Left cardiac atrium (tissue), 4 donors: ENCODE measurements at regions of chr10 and their contacts with region 1.

Region 1: GRCh38 chr10:91367127-91367531 is 43.0 kb upstream of the HECTD2 start:
- DNase-seq: no peak
- ATAC-seq: peak; percentile 30 to 53

Region 2: DNA sequence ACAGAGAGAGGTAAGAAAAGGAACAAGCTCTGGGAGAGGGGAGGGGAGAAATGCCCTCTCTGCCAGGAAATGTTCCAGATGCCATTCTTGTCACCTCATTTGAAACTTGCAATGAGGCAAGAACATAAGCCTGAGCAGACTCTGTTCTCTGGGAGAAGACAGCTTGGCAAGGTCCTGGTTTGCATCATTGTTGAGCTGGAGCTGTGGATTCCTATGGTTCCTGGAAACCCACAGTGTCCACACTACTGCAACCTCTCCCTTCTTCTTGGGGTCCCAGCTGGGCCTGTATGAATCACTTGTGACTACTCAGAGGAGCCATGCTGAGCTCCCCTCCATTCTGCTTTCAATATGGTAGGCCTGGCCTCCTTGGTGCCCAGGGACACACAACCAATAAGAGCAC is 17.7 kb before region 1 on chr10:
- intact Hi-C with region 1: loop called in 1 of 2 experiments (anchors 2 kb)
- DNase-seq: peak; percentile 40
- ATAC-seq: peak; percentile 81 to 92

Region 3: GRCh38 chr10:91381257-91381891 is 14.2 kb after region 1 on chr10:
- intact Hi-C with region 1: no loop called
- DNase-seq: peak; percentile 38
- ATAC-seq: peak; percentile 82 to 88